HCT116 (cell line): ENCODE measurements at regions of chr1 and their contacts with region 1.

Region 1: GRCh38 chr1:160354388-160354985 is 11.3 kb downstream of the NCSTN start:
- DNase-seq: no peak
- ATAC-seq: peak; percentile 89
- H3K4me3 ChIP-seq: no peak overlapping the region
- H3K27ac ChIP-seq: no peak overlapping the region
- H3K4me1 ChIP-seq: no peaks in the 10 kb centered on the region
- H3K27me3 ChIP-seq: no peaks in the 10 kb centered on the region
- CTCF ChIP-seq: peak; percentile 51 to 74 (median 70); a peak in 5 of 6 replicates
- POLR2A ChIP-seq: no peak
- RAD21 ChIP-seq: peak; percentile 39

Region 2: DNA sequence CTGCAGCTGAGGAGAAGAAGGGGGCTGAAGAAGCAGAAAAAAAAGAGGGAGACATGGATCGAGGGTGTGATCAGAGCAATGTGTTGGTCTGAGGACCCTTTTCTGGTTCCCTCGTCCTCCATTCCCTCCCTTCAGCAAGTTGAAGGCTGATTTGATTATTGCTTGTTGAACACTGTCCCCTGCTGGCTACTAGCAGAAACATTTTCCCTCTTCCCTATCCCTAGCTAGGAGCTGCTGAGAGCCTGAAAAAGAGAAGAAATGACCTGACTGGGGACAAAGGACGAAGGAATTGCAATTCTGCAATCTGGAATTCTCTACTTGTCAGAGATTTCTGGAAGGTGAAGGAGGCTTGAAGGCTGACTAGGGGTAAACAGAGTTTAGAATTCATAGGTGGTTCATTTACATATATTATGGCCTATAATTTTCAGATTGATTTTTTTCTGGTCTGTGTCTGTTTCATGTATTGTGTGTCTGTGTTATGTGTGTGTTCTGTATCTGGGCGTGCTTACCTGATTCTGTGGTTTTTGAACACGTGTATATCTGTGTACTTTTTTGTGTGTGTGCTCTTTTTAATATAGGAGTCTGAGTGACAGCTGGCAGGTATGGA is 22.1 kb after region 1 on chr1:
- CTCF ChIA-PET with region 1: interaction called, 24 read pairs
- POLR2A ChIA-PET with region 1: no interaction called
- RAD21 ChIA-PET with region 1: no interaction called
- intact Hi-C with region 1: no loop called
- DNase-seq: peak; percentile 61
- ATAC-seq: peak; percentile 92
- H3K4me3 ChIP-seq: no peak overlapping the region
- H3K27ac ChIP-seq: no peak overlapping the region
- H3K4me1 ChIP-seq: peaks cover 0 to 8% of the 10 kb centered on the region in 2 experiments; a peak in 1 of 4 replicates
- H3K27me3 ChIP-seq: no peaks in the 10 kb centered on the region
- CTCF ChIP-seq: peak; percentile 89 to 96 (median 92)
- POLR2A ChIP-seq: no peak
- RAD21 ChIP-seq: peak; percentile 96

Region 3: GRCh38 chr1:160416369-160416768 is 61.9 kb after region 1 on chr1:
- CTCF ChIA-PET with region 1: interaction called, 21 read pairs
- POLR2A ChIA-PET with region 1: no interaction called
- RAD21 ChIA-PET with region 1: interaction called in 1 of 2 experiments, 4 read pairs
- intact Hi-C with region 1: loop called (anchors 1 kb)
- DNase-seq: peak; percentile 36
- ATAC-seq: peak; percentile 98
- H3K4me3 ChIP-seq: no peak overlapping the region
- H3K27ac ChIP-seq: no peak overlapping the region
- H3K4me1 ChIP-seq: no peaks in the 10 kb centered on the region
- H3K27me3 ChIP-seq: no peaks in the 10 kb centered on the region
- CTCF ChIP-seq: peak; percentile 64 to 85 (median 75)
- POLR2A ChIP-seq: no peak
- RAD21 ChIP-seq: peak; percentile 94